Posterior vena cava (tissue), 2 donors: ENCODE measurements at regions of chr10 and their contacts with region 1.

Region 1: GRCh38 chr10:117431160-117431559 is 55.9 kb upstream of the PDZD8 start:
- DNase-seq: no peak

Region 2: DNA sequence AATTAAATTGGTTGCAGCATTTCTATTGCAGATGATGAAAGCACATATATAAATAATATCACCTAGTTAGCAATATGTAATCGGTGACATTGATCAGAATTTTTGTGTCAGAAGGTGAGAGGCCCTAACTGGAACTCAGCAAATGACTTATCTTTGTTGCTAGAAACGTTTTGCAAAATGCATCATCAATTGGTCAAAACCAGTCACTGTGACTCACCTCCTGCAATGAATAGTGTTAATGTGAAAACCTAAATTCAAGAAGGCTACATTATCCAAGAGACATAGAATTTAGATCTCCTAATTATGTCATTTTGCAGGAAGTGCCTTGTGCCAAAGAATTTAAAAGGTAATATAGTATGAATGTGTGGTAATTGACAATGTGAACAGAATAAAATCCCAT is 1013.3 kb before region 1 on chr10:
- intact Hi-C with region 1: loop called in 1 of 2 experiments (anchors 5 kb)
- DNase-seq: no peak